AG04450 (cell line): ENCODE measurements at regions of chr16 and their contacts with region 1.

Region 1: GRCh38 chr16:46689365-46690280 is at the start of gene ORC6:
- DNase-seq: peak; percentile 89
- H3K4me3 ChIP-seq: peak within 1 kb of the TSS; percentile 94
- H3K27ac ChIP-seq: peak within 1 kb of the TSS; percentile 95
- H3K27me3 ChIP-seq: no peaks in the 10 kb centered on the region
- CTCF ChIP-seq: peak; percentile 69
- polyA plus RNA-seq, gene ORC6: 4.2 and 6.6 TPM in 2 replicates

Region 2: DNA sequence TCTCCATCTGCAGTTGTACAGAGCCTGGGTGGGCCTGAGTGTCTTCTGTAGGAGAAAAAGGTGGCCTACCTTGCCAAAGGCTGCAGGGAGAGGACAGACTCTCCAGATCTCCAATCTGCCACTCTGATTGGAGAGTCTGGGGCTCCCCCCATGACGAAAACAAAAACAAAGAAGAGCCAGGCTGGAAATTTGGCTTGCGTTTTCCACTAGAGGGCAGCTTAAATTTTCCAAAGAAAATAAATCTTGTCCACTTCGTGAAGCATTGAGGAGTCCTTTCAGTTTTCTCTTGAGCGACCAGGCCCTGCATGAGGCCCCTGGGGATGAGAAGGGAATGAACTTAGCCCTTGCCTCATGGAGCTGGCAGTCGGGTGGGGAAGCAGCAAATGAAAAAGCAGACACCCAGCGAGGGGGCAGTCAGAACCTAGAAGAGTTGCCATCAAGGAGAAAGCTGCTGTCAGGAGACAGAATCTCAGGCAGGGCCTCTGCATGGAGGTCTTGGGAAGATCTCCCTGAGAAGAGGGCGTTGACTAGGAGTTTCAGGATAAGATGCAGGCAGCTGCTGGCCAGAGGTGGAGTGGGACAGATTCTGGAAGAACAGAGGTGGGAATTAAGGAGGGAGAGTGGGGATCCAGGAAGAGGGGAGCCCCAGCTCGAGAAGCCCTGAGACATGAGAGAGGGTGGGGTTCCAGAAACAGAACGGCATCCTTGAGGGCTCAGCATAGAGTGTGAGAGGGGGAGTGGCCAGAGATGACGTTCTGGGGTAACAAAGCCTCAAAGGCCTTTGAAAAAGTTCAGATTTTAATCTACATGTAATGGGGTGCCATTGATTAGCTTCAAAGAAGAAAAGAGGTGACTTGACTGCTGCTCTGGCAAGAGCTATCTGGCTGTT is 60.0 kb before region 1 on chr16:
- CTCF ChIA-PET with region 1: interaction called, 12 read pairs
- POLR2A ChIA-PET with region 1: interaction called, 3 read pairs
- DNase-seq: no peak
- H3K4me3 ChIP-seq: peak overlapping the region; percentile 18; the same call in 1 of the 2 replicates
- H3K27ac ChIP-seq: peak overlapping the region; percentile 43
- H3K27me3 ChIP-seq: peaks cover 3% of the 10 kb centered on the region
- CTCF ChIP-seq: peak; percentile 63

Region 3: DNA sequence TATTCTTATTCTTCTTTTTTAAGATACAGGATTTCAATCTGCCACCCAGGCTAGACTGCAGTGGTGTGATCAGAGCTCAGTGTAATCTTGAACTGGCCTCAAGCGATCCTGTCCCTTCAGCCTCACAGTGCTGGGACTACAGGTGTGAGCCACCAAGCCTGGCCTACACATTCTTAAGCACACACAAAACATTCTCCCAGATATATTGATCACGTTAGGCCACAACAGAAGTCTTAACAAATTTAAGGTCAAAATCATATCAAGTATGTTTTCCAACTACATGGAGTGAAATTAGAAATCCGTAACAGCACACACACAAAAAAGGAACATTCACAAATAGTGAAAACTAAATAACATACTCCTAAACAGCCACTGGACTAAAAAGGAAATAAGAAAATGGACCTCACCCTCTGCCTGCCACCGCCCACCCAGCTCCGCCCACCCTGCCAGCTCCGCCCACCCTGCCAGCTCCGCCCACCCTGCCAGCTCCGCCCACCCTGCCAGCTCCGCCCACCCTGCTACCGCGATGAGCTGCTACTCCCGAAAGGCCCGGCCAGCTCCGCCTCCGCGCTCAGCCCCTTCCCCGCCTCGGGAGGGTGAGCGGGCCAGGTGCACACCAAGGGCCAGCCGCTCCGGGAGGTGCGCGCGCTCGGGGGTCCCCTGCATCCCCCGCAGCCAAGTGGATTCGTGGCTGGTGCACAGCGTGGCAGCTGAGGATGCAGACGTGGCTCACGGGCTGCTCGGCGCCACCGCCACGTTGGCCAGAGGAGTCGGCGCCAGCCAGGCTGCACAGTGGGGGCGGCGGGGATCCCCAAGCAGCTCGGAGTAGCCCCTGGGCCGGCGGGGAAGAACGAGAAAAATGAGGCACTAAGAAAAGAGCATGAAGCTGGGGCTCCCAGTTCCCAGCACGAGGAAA is 100.1 kb after region 1 on chr16:
- CTCF ChIA-PET with region 1: no interaction called
- POLR2A ChIA-PET with region 1: interaction called, 10 read pairs
- DNase-seq: no peak
- H3K4me3 ChIP-seq: peak overlapping the region; percentile 60
- H3K27ac ChIP-seq: peak overlapping the region; percentile 42
- H3K27me3 ChIP-seq: no peaks in the 10 kb centered on the region
- CTCF ChIP-seq: no peak